K562 (cell line): ENCODE measurements at regions of chr6 and their contacts with region 1.

Region 1: DNA sequence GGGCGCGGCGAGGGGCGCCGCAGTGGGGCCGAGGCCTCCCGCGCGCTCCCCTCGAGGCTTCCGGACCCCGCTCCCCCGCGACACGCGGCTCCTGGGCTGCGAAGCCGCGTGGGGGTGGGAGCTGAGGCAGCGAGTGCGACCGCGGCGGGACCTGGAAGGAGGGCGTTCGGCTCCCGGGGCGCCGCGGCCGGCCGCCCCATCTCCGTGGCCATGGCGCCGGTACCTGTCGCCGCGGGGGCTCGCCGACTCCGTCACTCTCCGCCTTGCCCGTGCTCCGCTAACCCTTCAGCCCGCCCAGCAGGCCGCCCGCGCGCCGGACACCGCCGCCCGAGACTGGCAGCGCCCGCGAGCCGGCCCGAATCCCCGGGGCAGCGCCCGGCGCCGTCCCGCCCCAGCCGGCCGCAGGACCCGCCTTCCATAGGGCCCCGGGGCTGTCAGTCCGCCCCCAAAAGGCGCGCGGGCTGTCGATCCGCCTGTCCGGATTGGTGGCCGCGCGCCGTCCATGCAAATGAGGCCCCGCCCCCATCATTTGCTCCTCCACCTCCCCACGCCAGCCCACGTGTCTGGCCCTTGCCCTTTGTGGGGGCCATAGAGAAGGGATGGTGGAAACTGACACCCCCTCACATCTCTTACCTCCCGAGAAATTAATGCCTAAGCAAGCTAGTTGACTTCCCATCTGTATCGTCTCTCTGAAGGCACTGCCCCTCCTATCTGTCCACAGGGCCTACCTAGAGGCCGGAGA is at the start of gene FKBP5:
- DNase-seq: peak; percentile 98 to 100 (median 99)
- ATAC-seq: peak; percentile 92
- H3K4me3 ChIP-seq: peak within 1 kb of the TSS; percentile 96
- H3K27ac ChIP-seq: peak within 1 kb of the TSS; percentile 86
- H3K4me1 ChIP-seq: peaks cover 5 to 24% of the 10 kb centered on the region in 2 experiments; a peak in 4 of 5 replicates
- H3K27me3 ChIP-seq: no peaks in the 10 kb centered on the region
- CTCF ChIP-seq: no peak; a peak in 1 of 6 replicates
- EP300 ChIP-seq: no peak
- POLR2A ChIP-seq: peak; percentile 70
- RAD21 ChIP-seq: peak in 1 of 2 experiments; percentile 3; a peak in 1 of 4 replicates
- polyA plus RNA-seq, gene FKBP5: 32.7 to 46.1 TPM

Region 2: GRCh38 chr6:35449287-35449881 is 239.4 kb before region 1 on chr6:
- CTCF ChIA-PET with region 1: no interaction called
- POLR2A ChIA-PET with region 1: no interaction called
- in situ Hi-C with region 1: no loop called
- intact Hi-C with region 1: no loop called
- DNase-seq: peak; percentile 77 to 87 (median 80)
- ATAC-seq: peak; percentile 75
- H3K4me3 ChIP-seq: no peak overlapping the region
- H3K27ac ChIP-seq: no peak overlapping the region
- H3K4me1 ChIP-seq: peaks cover 18 to 29% of the 10 kb centered on the region in 2 experiments
- H3K27me3 ChIP-seq: peaks cover 14 to 15% of the 10 kb centered on the region in 2 experiments; a peak in 4 of 5 replicates
- CTCF ChIP-seq: peak; percentile 82 to 97 (median 87)
- EP300 ChIP-seq: no peak
- POLR2A ChIP-seq: no peak
- RAD21 ChIP-seq: peak; percentile 98 to 99

Region 3: GRCh38 chr6:35678021-35678654 is 10.6 kb before region 1 on chr6:
- CTCF ChIA-PET with region 1: interaction called, 3 read pairs
- POLR2A ChIA-PET with region 1: interaction called, 19 read pairs
- in situ Hi-C with region 1: no loop called
- intact Hi-C with region 1: no loop called
- DNase-seq: no peak
- ATAC-seq: no peak
- H3K4me3 ChIP-seq: no peak overlapping the region
- H3K27ac ChIP-seq: no peak overlapping the region; the same call in 2 of the 3 replicates
- H3K4me1 ChIP-seq: 0 out of 5 replicates have a peak, but pooled peaks cover 0 to 6% of the 10 kb centered on the region in 2 experiments
- H3K27me3 ChIP-seq: no peaks in the 10 kb centered on the region
- CTCF ChIP-seq: no peak
- EP300 ChIP-seq: no peak
- POLR2A ChIP-seq: no peak
- RAD21 ChIP-seq: no peak

Region 4: GRCh38 chr6:35731736-35732532 is 43.2 kb after region 1 on chr6:
- CTCF ChIA-PET with region 1: no interaction called
- POLR2A ChIA-PET with region 1: interaction called, 4 read pairs
- in situ Hi-C with region 1: no loop called
- intact Hi-C with region 1: loop called (anchors 1 kb)
- DNase-seq: peak; percentile 97 to 98 (median 98)
- ATAC-seq: peak; percentile 75
- H3K4me3 ChIP-seq: peak overlapping the region; percentile 77
- H3K27ac ChIP-seq: peak overlapping the region; percentile 85
- H3K4me1 ChIP-seq: peaks cover 46 to 63% of the 10 kb centered on the region in 2 experiments
- H3K27me3 ChIP-seq: no peaks in the 10 kb centered on the region
- CTCF ChIP-seq: peak; percentile 30 to 50 (median 42)
- EP300 ChIP-seq: peak; percentile 65; the same call in 1 of the 2 replicates
- POLR2A ChIP-seq: peak; percentile 89
- RAD21 ChIP-seq: peak; percentile 12 to 30; a peak in 1 of 4 replicates